Pancreas (tissue), 10 donors: ENCODE measurements at regions of chr7 and their contacts with region 1.

Region 1: DNA sequence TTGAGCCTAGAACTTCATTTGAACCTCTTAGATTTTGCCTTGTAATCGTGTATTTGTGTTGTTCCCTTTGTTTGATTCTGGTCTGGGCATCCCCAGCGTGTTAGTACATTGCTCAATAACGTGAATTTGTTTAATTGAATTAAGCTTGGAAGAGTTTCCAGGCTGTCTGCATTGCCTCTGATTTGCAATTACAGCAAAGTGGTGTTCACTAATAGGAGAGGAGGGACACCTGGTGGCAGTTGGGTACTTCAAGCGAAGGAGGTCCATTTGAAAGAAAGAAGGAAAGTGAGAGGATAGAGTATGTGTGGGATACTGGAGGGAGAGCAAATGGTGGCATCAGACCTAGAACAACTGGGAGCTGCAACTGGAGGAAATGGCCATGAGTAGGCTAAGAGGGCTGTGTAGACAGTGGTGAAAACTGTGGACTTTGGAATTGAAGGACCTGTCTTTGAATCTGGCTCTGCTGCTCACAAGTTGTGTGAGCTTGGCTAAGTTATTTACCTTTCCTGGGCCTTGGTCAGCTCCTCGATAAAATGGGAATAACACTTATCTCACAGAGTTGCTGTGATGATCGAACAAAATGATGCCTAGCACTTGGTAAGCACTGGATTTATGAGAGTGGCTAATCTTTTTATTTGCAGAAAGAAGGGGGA is 15.1 kb downstream of the LSMEM1 start:
- DNase-seq: peak in 3 of 6 donors; percentile 41 to 56 (median 51)
- ATAC-seq: peak; percentile 80 to 98 (median 94)
- H3K4me3 ChIP-seq: no peak overlapping the region
- H3K27ac ChIP-seq: no peak overlapping the region
- H3K4me1 ChIP-seq: no peaks in the 10 kb centered on the region
- H3K27me3 ChIP-seq: no peaks in the 10 kb centered on the region
- CTCF ChIP-seq: peak; percentile 11 to 55 (median 48)

Region 2: DNA sequence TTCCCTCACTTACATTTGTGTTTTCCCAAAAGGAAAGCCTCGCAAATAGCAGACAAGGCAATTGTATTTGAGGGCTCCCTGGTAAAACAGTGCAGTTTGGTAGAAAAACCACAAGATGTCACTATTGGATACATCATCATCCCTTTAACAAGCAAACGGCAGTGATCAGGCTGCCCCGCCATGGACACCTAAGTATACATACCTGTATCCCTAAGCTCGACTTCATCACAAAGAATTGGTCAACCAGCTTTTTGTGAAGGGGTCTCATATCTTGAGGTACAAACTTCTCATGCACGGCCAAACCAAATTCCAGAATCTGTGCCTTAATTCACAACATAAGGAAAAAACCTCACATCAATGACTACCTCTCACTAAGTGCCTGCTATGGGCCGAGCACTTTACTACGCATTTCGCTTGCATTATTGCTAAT is 754.1 kb before region 1 on chr7:
- intact Hi-C with region 1: loop called in 1 of 3 experiments (anchors 10 kb)
- DNase-seq: peak; percentile 29 to 80 (median 54)
- ATAC-seq: peak; percentile 87 to 98 (median 94)
- H3K4me3 ChIP-seq: no peak overlapping the region
- H3K27ac ChIP-seq: no peak overlapping the region
- H3K4me1 ChIP-seq: no peaks in the 10 kb centered on the region
- H3K27me3 ChIP-seq: no peaks in the 10 kb centered on the region
- CTCF ChIP-seq: peak; percentile 21 to 59 (median 40)

Region 3: GRCh38 chr7:112414855-112415490 is 81.0 kb before region 1 on chr7:
- intact Hi-C with region 1: loop called in 1 of 3 experiments (anchors 10 kb)
- DNase-seq: no peak
- ATAC-seq: peak; percentile 77 to 91 (median 88)
- H3K4me3 ChIP-seq: no peak overlapping the region
- H3K27ac ChIP-seq: no peak overlapping the region
- H3K4me1 ChIP-seq: peaks cover 0 to 7% (median 0%) of the 10 kb centered on the region in 3 donors
- H3K27me3 ChIP-seq: no peaks in the 10 kb centered on the region
- CTCF ChIP-seq: peak in 3 of 4 donors; percentile 17 to 43 (median 41)